Mammary epithelial cell (primary cell): ENCODE measurements at regions of chr14 and their contacts with region 1.

Region 1: GRCh38 chr14:75720842-75721498 is 59.9 kb downstream of the TTLL5 start:
- DNase-seq: peak; percentile 18
- H3K4me3 ChIP-seq: no peak overlapping the region
- H3K27ac ChIP-seq: no peak overlapping the region
- H3K4me1 ChIP-seq: no peaks in the 10 kb centered on the region
- H3K27me3 ChIP-seq: no peaks in the 10 kb centered on the region
- CTCF ChIP-seq: no peak

Region 2: GRCh38 chr14:75542588-75543091 is 178.3 kb before region 1 on chr14:
- CTCF ChIA-PET with region 1: no interaction called
- dilution Hi-C with region 1: no loop called
- in situ Hi-C with region 1: no loop called
- intact Hi-C with region 1: no loop called
- DNase-seq: no peak
- H3K4me3 ChIP-seq: no peak overlapping the region
- H3K27ac ChIP-seq: no peak overlapping the region
- H3K4me1 ChIP-seq: no peaks in the 10 kb centered on the region
- H3K27me3 ChIP-seq: no peaks in the 10 kb centered on the region
- CTCF ChIP-seq: no peak

Region 3: DNA sequence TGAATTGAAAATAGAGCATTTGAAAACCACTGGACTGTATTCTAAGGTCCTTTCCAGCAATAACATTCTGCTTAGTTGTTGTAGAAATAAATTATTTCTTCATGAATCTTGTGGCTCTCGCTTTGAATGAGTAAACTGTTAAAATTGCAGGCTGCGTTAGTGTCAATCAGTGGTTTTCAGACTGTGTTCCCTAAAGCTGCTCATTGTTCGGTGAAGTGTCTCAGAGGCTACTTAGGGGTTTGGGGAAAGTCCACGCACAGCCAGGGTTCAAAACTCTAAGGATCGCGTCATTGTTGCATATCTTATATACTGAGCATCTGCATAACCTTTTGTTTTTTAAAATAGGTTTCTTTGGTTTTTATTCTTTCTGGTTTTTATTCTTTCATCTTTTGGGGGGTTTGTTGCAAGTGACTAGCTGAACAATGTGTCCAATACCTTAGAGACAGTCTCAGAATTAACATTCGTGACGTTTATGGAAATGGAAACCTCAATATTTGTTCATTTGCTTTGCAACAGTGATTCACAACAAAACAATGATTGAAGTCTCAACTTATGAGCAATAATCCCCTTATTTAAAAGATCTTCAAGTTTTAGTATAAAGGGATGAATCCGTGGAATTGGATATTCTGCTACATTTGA is 48.2 kb after region 1 on chr14:
- CTCF ChIA-PET with region 1: no interaction called
- dilution Hi-C with region 1: loop called (anchors 5 kb)
- in situ Hi-C with region 1: no loop called
- intact Hi-C with region 1: no loop called
- DNase-seq: no peak
- H3K4me3 ChIP-seq: no peak overlapping the region
- H3K27ac ChIP-seq: no peak overlapping the region
- H3K4me1 ChIP-seq: no peaks in the 10 kb centered on the region
- H3K27me3 ChIP-seq: no peaks in the 10 kb centered on the region
- CTCF ChIP-seq: no peak

Region 4: GRCh38 chr14:75972801-75973421 is 251.9 kb after region 1 on chr14:
- CTCF ChIA-PET with region 1: no interaction called
- dilution Hi-C with region 1: loop called (anchors 5 kb)
- in situ Hi-C with region 1: no loop called
- intact Hi-C with region 1: no loop called
- DNase-seq: no peak
- H3K4me3 ChIP-seq: no peak overlapping the region
- H3K27ac ChIP-seq: no peak overlapping the region
- H3K4me1 ChIP-seq: no peaks in the 10 kb centered on the region
- H3K27me3 ChIP-seq: no peaks in the 10 kb centered on the region
- CTCF ChIP-seq: no peak